Activated CD8-positive, alpha-beta memory T cell treated with anti-CD3 and anti-CD28 coated beads, Interleukin-2, amount 10 ng/mL, durations not matched to agents 7 days and 5 days (primary cell): ENCODE measurements at regions of chr2 and their contacts with region 1.

Region 1: GRCh38 chr2:174748948-174749347 is 15.3 kb downstream of the CHRNA1 start:
- DNase-seq: peak; percentile 79
- ATAC-seq: peak; percentile 48
- H3K4me3 Mint-ChIP-seq: no peak overlapping the region
- H3K27ac Mint-ChIP-seq: no peak overlapping the region
- H3K4me1 Mint-ChIP-seq: peaks cover 38% of the 10 kb centered on the region
- H3K27me3 Mint-ChIP-seq: peaks cover 14% of the 10 kb centered on the region

Region 2: DNA sequence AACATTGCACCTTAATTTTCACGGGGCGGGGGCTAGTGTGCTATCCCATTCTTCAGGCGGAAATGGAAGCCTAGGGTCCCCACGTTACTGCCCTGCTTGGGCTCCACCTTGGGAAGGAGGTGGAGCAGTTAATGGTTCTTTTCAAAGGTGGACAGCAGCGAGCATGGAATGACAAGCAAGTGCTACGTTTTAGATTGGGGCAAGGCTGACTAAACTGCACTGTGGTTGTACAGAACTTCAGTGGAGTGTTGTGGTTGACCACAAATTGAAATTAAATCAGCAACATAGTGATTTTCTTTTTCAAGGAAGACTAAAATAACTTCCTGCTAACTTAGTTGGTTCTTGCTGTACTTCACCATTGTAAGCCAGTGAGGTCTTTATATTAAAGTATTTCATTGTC is 31.7 kb before region 1 on chr2:
- CTCF ChIA-PET with region 1: interaction called, 12 read pairs
- DNase-seq: peak; percentile 58
- ATAC-seq: peak; percentile 77
- H3K4me3 Mint-ChIP-seq: peak overlapping the region; percentile 45
- H3K27ac Mint-ChIP-seq: peak overlapping the region; percentile 66
- H3K4me1 Mint-ChIP-seq: peaks cover 33% of the 10 kb centered on the region
- H3K27me3 Mint-ChIP-seq: no peaks in the 10 kb centered on the region

Region 3: DNA sequence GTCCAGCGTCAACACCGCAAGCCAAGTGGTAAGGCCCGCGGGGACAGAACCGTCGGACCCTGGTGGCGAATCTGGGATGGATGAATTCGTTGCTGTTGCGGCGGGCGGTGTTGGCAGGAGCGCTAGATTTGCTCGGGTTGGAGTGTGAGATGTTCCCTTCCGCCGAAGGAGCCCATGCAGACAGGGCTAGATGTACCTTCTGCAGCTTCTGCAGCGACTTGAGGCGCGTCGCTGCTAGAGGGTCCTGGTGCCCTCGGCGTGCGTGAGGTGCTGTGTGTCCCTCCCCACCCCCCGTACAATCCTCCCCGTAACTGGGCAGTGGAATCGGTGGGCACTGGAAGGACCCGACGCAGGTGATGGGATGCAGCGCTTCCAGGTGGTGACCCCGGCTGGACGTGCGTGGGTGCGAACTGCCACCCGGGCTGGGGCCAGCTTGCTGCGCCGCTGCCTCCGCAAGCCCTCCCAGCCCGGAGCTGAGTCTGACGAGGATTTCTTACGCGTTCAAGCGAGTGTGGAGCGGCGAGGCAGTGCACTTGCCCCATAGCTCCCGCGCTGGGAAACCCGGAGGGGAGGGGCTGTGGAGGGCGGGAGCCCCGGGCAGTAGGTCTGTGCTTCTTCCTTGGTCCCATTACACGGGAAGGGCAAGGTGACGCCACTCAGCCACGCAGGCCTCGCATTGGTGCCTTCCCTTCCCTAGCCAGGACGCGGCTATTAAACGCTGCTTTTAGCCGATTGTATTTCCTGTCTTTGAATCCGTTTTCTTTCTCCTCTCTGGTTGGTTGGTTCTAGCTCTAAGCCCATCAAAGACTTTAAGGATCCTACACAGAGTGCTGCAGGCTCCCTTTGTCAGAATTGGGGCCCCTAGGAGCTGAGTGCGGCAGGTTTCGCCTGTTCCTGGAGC is 18.9 kb before region 1 on chr2:
- CTCF ChIA-PET with region 1: interaction called, 17 read pairs
- DNase-seq: peak; percentile 56
- ATAC-seq: peak; percentile 85
- H3K4me3 Mint-ChIP-seq: peak overlapping the region; percentile 75
- H3K27ac Mint-ChIP-seq: no peak overlapping the region
- H3K4me1 Mint-ChIP-seq: peaks cover 23% of the 10 kb centered on the region
- H3K27me3 Mint-ChIP-seq: peaks cover 55% of the 10 kb centered on the region

Region 4: GRCh38 chr2:174771631-174772471 is 22.9 kb after region 1 on chr2:
- CTCF ChIA-PET with region 1: interaction called, 16 read pairs
- DNase-seq: peak; percentile 67
- ATAC-seq: peak; percentile 84
- H3K4me3 Mint-ChIP-seq: no peak overlapping the region
- H3K27ac Mint-ChIP-seq: no peak overlapping the region
- H3K4me1 Mint-ChIP-seq: peaks cover 7% of the 10 kb centered on the region
- H3K27me3 Mint-ChIP-seq: no peaks in the 10 kb centered on the region

Region 5: DNA sequence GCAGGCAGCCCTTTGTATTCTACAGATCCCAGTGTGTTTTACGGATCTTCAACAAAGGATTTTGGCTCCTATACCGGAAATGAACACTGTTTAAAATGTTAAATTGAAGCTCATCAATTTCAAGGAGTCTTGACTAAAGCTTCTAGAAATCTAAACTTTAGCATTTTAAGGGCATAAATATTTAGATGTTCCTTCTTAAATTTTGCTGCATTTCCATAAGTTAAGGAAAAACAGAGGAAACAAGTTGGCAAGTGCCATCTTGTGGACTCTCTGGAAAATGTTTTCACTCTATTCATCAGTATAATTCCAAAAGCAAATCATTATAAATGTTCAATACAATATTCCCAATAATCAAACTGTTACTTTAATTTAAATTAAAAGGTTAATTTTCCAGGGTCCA is 236.7 kb after region 1 on chr2:
- CTCF ChIA-PET with region 1: interaction called, 30 read pairs
- DNase-seq: no peak
- ATAC-seq: no peak
- H3K4me3 Mint-ChIP-seq: no peak overlapping the region
- H3K27ac Mint-ChIP-seq: no peak overlapping the region
- H3K4me1 Mint-ChIP-seq: peaks cover 3% of the 10 kb centered on the region
- H3K27me3 Mint-ChIP-seq: peaks cover 6% of the 10 kb centered on the region

Region 6: DNA sequence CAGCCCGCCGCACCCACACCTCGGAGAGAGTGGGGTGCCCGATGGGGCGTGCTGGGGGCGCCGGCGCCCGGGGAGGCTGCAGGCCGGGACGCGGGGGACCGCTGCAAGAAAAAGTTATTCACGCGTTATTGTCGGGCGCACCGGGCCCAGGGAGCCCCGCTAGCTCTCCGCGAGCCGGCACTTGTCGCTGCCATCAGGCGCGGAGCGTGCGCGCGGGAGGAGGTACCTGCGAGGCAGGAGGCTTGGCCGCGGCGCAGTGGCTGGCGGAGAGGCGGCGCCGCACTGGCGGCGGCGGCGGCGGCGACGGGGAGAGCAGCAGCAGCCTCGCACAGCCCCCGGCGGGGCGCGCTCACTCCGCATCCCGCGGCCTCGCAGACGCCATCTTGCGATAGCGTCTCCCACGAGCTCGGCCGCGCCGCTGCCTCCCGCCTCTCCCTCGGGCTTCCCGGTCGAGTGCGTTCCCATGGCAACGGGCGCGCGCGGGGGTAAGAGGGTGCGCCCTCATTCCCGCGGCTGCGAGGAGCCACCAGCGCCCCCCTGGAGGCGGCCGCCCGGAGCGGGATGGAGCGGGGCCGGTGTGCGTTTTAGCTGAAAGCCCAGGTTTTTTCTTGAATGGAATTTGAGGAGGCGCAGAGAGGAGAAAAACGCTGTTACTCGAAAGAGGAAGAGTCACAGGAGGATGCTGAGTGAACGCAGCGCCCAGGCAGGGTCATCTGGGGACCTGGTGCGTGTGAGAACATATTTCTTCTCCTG is 256.2 kb after region 1 on chr2 and contains the start of gene CHN1:
- CTCF ChIA-PET with region 1: interaction called, 17 read pairs
- DNase-seq: peak; percentile 66
- ATAC-seq: peak; percentile 88
- H3K4me3 Mint-ChIP-seq: peak within 1 kb of the TSS; percentile 71
- H3K27ac Mint-ChIP-seq: no peak within 1 kb of the TSS
- H3K4me1 Mint-ChIP-seq: peaks cover 10% of the 10 kb centered on the region
- H3K27me3 Mint-ChIP-seq: peaks cover 65% of the 10 kb centered on the region
- total RNA-seq, gene CHN1: 1.7 to 4.5 TPM